CD8-positive, alpha-beta memory T cell (primary cell): ENCODE measurements at regions of chr1 and their contacts with region 1.

Region 1: DNA sequence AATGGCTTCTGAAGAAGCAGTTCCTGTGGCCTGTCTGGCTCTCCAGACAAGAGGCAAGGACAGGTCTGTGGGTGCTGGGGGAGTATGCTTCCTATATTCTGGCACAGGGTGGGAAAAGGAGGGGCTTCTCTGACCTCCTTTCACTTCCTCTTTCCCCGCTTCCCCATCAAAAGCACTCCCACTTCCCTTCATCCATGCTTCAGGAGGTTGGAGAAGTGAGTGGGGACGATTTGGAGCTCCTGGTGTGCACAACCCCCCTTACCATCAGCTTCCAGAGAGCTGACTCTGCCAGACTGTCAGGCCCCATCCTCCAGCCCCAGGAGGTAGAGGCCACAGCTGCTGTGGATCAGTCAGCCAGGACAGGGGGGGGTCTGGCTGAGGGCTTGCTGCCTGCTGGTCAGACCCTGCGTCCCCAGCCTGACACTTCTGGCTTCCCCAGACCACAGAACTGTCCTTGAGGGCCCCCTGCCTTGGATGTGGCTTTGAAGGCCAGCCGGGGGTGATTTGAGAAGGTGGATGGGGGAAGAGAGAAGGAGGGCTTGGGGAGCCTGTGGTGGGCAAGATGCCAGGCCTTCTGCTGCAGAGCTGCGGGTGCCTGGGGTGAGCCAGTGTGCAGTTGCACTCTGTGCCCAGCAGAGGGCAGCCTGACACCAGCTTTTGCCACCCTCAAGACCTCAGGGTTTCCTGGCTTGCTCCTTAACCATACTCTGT is 21.5 kb upstream of the TMEM222 start:
- DNase-seq: peak; percentile 64 to 82 (median 72)
- H3K4me3 ChIP-seq: no peak overlapping the region
- H3K4me3 Mint-ChIP-seq: no peak overlapping the region
- H3K27ac ChIP-seq: no peak overlapping the region
- H3K27ac Mint-ChIP-seq: peak overlapping the region in 4 of 8 donors; percentile 27 to 74 (median 36)
- H3K4me1 ChIP-seq: no peaks in the 10 kb centered on the region
- H3K4me1 Mint-ChIP-seq: peaks cover 0 to 6% (median 4%) of the 10 kb centered on the region in 3 donors
- H3K27me3 ChIP-seq: no peaks in the 10 kb centered on the region
- H3K27me3 Mint-ChIP-seq: no peaks in the 10 kb centered on the region

Region 2: GRCh38 chr1:27111626-27112573 is 188.6 kb before region 1 on chr1:
- CTCF ChIA-PET with region 1: interaction called, 13 read pairs
- POLR2A ChIA-PET with region 1: interaction called, 7 read pairs
- DNase-seq: peak; percentile 46 to 80 (median 59)
- H3K4me3 ChIP-seq: peak overlapping the region; percentile 39
- H3K4me3 Mint-ChIP-seq: peak overlapping the region in 5 of 7 donors; percentile 49 to 76 (median 62)
- H3K27ac ChIP-seq: peak overlapping the region; percentile 35
- H3K27ac Mint-ChIP-seq: peak overlapping the region; percentile 55 to 95 (median 88)
- H3K4me1 ChIP-seq: peaks cover 44% of the 10 kb centered on the region
- H3K4me1 Mint-ChIP-seq: peaks cover 40 to 66% (median 56%) of the 10 kb centered on the region in 3 donors
- H3K27me3 ChIP-seq: no peaks in the 10 kb centered on the region
- H3K27me3 Mint-ChIP-seq: no peaks in the 10 kb centered on the region

Region 3: GRCh38 chr1:27269276-27269675 is 31.2 kb before region 1 on chr1:
- CTCF ChIA-PET with region 1: no interaction called
- POLR2A ChIA-PET with region 1: no interaction called
- DNase-seq: no peak
- H3K4me3 ChIP-seq: no peak overlapping the region
- H3K4me3 Mint-ChIP-seq: no peak overlapping the region
- H3K27ac ChIP-seq: no peak overlapping the region
- H3K27ac Mint-ChIP-seq: peak overlapping the region in 2 of 8 donors; percentile 8 to 75
- H3K4me1 ChIP-seq: no peaks in the 10 kb centered on the region
- H3K4me1 Mint-ChIP-seq: peaks cover 1 to 4% (median 4%) of the 10 kb centered on the region in 3 donors
- H3K27me3 ChIP-seq: no peaks in the 10 kb centered on the region
- H3K27me3 Mint-ChIP-seq: no peaks in the 10 kb centered on the region

Region 4: DNA sequence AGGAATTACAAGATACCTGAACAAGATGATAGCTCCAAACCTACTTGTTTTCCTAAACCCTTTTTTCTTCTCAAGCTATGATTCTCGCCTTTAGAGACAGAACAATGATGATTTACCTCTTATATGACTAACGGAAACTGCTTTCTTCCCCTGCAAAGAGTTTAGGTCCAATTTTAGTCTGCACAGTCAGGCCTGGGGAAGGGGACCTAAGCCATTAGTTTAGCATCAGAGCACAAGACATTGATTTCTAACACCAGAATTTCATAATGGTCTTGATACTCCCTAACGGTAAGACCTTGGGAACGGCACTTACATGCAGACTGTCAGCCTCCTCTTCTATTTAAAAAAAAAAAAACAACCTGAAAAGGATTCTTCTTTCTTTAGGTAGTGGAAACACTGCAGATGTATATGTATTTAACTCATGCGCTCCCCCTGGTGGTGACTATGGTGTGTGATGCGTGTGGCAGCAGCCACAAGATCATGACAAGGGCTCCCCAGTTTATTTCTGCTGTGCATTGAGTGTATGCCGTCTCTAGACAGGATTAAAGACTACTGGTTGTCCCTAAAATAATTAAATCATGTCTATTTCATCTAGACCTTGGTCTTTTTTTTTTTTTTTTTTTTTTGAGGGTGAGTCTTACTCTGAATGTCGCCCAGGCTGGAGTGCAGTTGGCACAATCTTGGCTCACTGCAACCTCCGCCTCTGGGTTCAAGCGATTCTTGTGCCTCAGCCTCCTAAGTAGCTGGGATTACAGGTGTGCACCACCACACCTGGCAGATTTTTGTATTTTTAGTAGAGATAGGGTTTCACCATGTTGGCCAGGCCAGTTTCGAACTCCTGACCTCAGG is 15.8 kb before region 1 on chr1:
- CTCF ChIA-PET with region 1: interaction called, 14 read pairs
- POLR2A ChIA-PET with region 1: no interaction called
- DNase-seq: peak; percentile 66 to 89 (median 77)
- H3K4me3 ChIP-seq: no peak overlapping the region
- H3K4me3 Mint-ChIP-seq: no peak overlapping the region
- H3K27ac ChIP-seq: no peak overlapping the region
- H3K27ac Mint-ChIP-seq: peak overlapping the region in 2 of 8 donors; percentile 20 to 34
- H3K4me1 ChIP-seq: no peaks in the 10 kb centered on the region
- H3K4me1 Mint-ChIP-seq: peaks cover 0 to 4% (median 0%) of the 10 kb centered on the region in 3 donors
- H3K27me3 ChIP-seq: no peaks in the 10 kb centered on the region
- H3K27me3 Mint-ChIP-seq: no peaks in the 10 kb centered on the region

Region 5: GRCh38 chr1:27349784-27350662 is 49.5 kb after region 1 on chr1:
- CTCF ChIA-PET with region 1: interaction called, 14 read pairs
- POLR2A ChIA-PET with region 1: no interaction called
- DNase-seq: no peak
- H3K4me3 ChIP-seq: no peak overlapping the region
- H3K4me3 Mint-ChIP-seq: peak overlapping the region in 1 of 7 donors; percentile 20
- H3K27ac ChIP-seq: no peak overlapping the region
- H3K27ac Mint-ChIP-seq: peak overlapping the region in 1 of 8 donors; percentile 46
- H3K4me1 ChIP-seq: peaks cover 11% of the 10 kb centered on the region
- H3K4me1 Mint-ChIP-seq: peaks cover 13 to 32% (median 14%) of the 10 kb centered on the region in 3 donors
- H3K27me3 ChIP-seq: no peaks in the 10 kb centered on the region
- H3K27me3 Mint-ChIP-seq: peaks cover 0 to 5% of the 10 kb centered on the region in 2 donors

Region 6: GRCh38 chr1:27392096-27392777 is 91.7 kb after region 1 on chr1 and contains the start of gene GPR3:
- CTCF ChIA-PET with region 1: interaction called, 283 read pairs
- POLR2A ChIA-PET with region 1: interaction called, 10 read pairs
- DNase-seq: peak; percentile 87 to 94 (median 92)
- H3K4me3 ChIP-seq: peak within 1 kb of the TSS; percentile 69
- H3K4me3 Mint-ChIP-seq: peak within 1 kb of the TSS; percentile 30 to 88 (median 86)
- H3K27ac ChIP-seq: peak within 1 kb of the TSS; percentile 43
- H3K27ac Mint-ChIP-seq: peak within 1 kb of the TSS in 7 of 8 donors; percentile 0 to 95 (median 93)
- H3K4me1 ChIP-seq: peaks cover 17% of the 10 kb centered on the region
- H3K4me1 Mint-ChIP-seq: peaks cover 15 to 22% (median 21%) of the 10 kb centered on the region in 3 donors
- H3K27me3 ChIP-seq: no peaks in the 10 kb centered on the region
- H3K27me3 Mint-ChIP-seq: peaks cover 1 to 12% of the 10 kb centered on the region in 2 donors
- total RNA-seq, gene GPR3: 3.3 to 3.9 TPM

Region 7: DNA sequence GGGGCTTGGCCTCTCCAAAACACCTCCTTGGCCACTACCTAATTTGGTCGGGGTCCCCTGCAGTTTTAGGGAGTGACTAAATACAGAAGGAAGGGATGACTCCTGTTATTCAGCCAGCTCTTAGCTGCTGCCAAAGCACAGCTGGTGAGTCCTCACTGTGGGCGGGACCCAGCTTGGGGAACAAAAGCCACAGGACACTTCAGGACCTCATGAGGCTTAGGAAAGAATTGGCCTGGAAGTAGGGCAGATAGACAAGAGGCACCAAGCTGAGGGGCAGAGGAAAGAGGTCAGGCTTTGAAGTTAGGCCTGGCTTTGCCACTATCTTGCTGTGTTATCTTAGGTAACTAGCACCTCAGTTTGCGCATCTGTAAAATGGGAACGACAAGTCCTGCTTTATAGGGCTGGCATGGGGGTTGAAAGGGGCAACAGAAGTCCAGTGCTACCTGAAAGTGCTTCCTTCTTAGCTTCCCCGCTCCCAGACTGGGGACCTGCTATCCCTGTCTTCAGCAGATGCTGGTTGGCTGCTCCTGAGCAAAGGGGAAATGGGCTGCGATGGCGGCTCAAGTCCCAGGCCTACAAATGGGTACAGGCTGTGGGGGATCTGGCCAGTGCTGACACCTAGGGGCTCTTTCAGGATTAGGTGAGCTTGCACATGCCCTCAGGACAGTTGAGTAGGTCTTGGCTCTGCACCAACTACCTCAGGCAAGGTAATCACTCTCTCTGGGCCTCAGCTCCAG is 355.8 kb after region 1 on chr1:
- CTCF ChIA-PET with region 1: no interaction called
- POLR2A ChIA-PET with region 1: no interaction called
- DNase-seq: no peak
- H3K4me3 ChIP-seq: no peak overlapping the region
- H3K4me3 Mint-ChIP-seq: no peak overlapping the region
- H3K27ac ChIP-seq: no peak overlapping the region
- H3K27ac Mint-ChIP-seq: peak overlapping the region in 4 of 8 donors; percentile 17 to 70 (median 46)
- H3K4me1 ChIP-seq: peaks cover 25% of the 10 kb centered on the region
- H3K4me1 Mint-ChIP-seq: peaks cover 28 to 29% (median 29%) of the 10 kb centered on the region in 3 donors
- H3K27me3 ChIP-seq: no peaks in the 10 kb centered on the region
- H3K27me3 Mint-ChIP-seq: peaks cover 0 to 1% of the 10 kb centered on the region in 2 donors